Caco-2 (cell line): ENCODE measurements at regions of chr3 and their contacts with region 1.

Region 1: GRCh38 chr3:49093853-49094767 is at the start of gene QRICH1:
- DNase-seq: peak; percentile 97 to 98
- H3K4me3 ChIP-seq: peak within 1 kb of the TSS; percentile 67
- H3K4me3 Mint-ChIP-seq: peak within 1 kb of the TSS; percentile 95
- H3K27ac Mint-ChIP-seq: peak within 1 kb of the TSS; percentile 99
- H3K4me1 ChIP-seq: peaks cover 4% of the 10 kb centered on the region
- H3K4me1 Mint-ChIP-seq: no peaks in the 10 kb centered on the region
- H3K27me3 ChIP-seq: no peaks in the 10 kb centered on the region
- H3K27me3 Mint-ChIP-seq: no peaks in the 10 kb centered on the region
- CTCF ChIP-seq: peak; percentile 33 to 83
- total RNA-seq, gene QRICH1: 112 and 119 TPM in 2 replicates

Region 2: DNA sequence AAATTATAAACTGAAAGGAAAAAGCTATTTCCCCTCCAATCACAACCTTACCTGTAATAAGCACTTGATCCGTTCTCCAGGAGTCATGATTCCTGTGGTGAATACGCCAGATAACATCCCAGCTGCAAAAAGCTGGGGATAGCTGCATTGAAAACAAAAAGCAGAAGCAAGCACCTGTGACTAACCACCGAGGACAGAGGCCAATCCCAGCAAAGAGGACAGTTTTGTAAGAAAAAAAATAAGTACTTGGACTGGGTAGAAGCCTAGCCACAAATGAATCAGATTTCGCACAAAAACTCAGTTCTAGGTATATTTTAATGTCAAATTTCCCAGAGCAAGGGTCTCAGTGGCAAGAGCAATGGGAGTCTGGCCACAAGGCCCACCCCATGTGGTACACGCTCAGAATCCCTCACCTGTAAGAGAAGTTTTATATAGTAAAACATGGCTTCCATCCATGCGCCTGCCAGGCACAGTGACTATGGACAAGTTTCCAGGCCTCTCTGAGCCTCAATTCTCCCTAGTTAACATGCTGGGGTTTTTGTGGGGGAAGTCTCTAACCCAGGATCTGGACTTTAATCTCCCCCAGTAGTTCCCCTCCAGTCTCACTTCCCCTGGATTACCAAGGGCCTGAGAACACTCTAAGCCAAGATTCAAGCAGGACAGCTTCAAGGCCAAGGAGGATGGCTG is 214.7 kb before region 1 on chr3:
- CTCF ChIA-PET with region 1: no interaction called
- POLR2A ChIA-PET with region 1: no interaction called
- intact Hi-C with region 1: no loop called
- DNase-seq: no peak
- H3K4me3 ChIP-seq: no peak overlapping the region
- H3K4me3 Mint-ChIP-seq: no peak overlapping the region
- H3K27ac Mint-ChIP-seq: no peak overlapping the region
- H3K4me1 ChIP-seq: no peaks in the 10 kb centered on the region
- H3K4me1 Mint-ChIP-seq: no peaks in the 10 kb centered on the region
- H3K27me3 ChIP-seq: no peaks in the 10 kb centered on the region
- H3K27me3 Mint-ChIP-seq: no peaks in the 10 kb centered on the region
- CTCF ChIP-seq: no peak

Region 3: GRCh38 chr3:48989796-48990635 is 104.1 kb before region 1 on chr3 and contains the start of gene P4HTM:
- CTCF ChIA-PET with region 1: interaction called, 20 read pairs
- POLR2A ChIA-PET with region 1: interaction called, 4 read pairs
- intact Hi-C with region 1: loop called (anchors 1 kb)
- DNase-seq: peak; percentile 82 to 84
- H3K4me3 ChIP-seq: peak within 1 kb of the TSS; percentile 95
- H3K4me3 Mint-ChIP-seq: peak within 1 kb of the TSS; percentile 96
- H3K27ac Mint-ChIP-seq: peak within 1 kb of the TSS; percentile 98
- H3K4me1 ChIP-seq: peaks cover 13% of the 10 kb centered on the region
- H3K4me1 Mint-ChIP-seq: peaks cover 13% of the 10 kb centered on the region
- H3K27me3 ChIP-seq: no peaks in the 10 kb centered on the region
- H3K27me3 Mint-ChIP-seq: no peaks in the 10 kb centered on the region
- CTCF ChIP-seq: peak in 1 of 2 experiments; percentile 40
- total RNA-seq, gene P4HTM: 24.4 and 25.5 TPM in 2 replicates

Region 4: DNA sequence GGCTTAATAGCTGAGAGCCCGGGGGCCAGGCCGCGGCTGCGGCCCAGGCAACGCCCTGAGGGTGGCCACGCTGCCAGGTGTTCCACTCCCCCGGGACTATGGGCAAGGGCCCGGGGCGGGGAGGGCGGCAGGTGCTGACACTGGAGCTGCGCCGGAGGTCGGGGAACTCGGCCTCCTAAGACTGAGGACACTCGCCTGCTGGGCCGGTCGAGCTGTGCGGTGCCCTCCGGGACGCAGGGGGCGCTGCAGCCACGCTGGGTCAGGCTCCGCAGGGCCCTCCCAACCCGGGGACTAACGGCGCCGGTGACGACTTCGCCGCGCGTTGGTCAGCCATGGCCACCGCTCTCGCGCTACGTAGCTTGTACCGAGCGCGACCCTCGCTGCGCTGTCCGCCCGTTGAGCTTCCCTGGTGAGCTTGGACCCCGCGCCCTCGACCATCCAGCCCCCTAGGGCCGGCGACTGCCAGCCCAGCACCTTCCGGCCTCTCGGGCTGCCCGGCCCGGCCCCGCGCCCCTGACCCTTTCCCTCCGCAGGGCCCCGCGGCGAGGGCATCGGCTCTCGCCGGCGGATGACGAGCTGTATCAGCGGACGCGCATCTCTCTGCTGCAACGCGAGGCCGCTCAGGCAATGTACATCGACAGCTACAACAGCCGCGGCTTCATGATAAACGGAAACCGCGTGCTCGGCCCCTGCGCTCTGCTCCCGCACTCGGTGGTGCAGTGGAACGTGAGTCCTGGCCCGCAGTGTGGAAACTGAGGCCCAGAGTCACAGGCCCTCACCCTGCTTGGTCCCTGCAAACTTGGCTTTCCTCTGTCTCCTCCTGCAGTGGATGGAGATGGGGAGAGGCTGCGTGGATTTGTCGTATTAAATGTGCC is 72.1 kb before region 1 on chr3 and contains the start of gene NDUFAF3:
- CTCF ChIA-PET with region 1: interaction called, 14 read pairs
- POLR2A ChIA-PET with region 1: interaction called, 44 read pairs
- intact Hi-C with region 1: loop called (anchors 2 kb)
- DNase-seq: peak; percentile 95 to 98
- H3K4me3 ChIP-seq: peak within 1 kb of the TSS; percentile 85
- H3K4me3 Mint-ChIP-seq: peak within 1 kb of the TSS; percentile 88
- H3K27ac Mint-ChIP-seq: peak within 1 kb of the TSS; percentile 97
- H3K4me1 ChIP-seq: peaks cover 3% of the 10 kb centered on the region; the same call in 1 of the 2 replicates
- H3K4me1 Mint-ChIP-seq: peaks cover 6% of the 10 kb centered on the region
- H3K27me3 ChIP-seq: no peaks in the 10 kb centered on the region
- H3K27me3 Mint-ChIP-seq: no peaks in the 10 kb centered on the region
- CTCF ChIP-seq: peak; percentile 82 to 92
- total RNA-seq, gene NDUFAF3: 65.9 and 68.7 TPM in 2 replicates

Region 5: DNA sequence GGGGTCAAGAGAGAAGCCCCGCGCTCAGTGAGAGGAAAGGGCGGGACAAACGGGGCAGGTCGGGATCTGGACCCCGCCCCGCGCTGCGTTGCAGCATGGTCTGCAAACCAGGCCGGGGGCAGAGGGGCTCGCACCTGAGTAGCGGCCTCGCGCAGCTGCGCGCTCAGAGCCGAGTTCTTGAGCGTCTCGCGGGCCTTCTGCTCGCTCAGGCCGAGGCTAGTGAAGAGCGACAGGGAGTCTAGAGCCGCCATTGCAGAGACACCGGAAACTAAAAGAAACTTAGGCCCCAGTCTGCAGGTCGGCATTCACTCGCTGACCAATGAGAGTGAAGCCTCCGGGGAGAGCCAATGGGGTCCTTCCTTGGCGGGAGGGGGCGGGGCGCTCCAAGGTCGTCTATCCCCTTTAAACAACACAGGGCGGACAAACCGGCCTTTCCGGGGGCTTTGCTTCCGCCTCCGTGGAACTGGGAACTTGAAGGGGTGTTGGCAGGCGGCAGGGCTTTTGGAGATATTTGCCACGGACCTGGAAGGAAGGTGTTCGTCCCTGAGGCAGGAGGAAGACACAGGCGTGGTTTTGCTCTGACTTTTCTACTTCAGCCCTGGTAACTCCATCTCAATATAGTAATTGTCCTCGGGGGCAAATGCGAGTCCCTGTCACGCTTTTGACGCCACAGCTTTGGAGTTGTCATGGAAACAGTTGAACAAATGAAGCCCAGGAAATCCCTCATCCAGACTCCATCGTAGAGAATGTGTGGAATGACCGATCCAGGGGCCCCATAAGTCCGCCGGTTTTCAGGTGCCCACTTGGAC is 10.6 kb after region 1 on chr3 and contains the start of gene QARS1:
- CTCF ChIA-PET with region 1: interaction called, 8 read pairs
- POLR2A ChIA-PET with region 1: interaction called, 17 read pairs
- intact Hi-C with region 1: loop called (anchors 1 kb)
- DNase-seq: peak; percentile 95 to 96
- H3K4me3 ChIP-seq: peak within 1 kb of the TSS; percentile 80
- H3K4me3 Mint-ChIP-seq: peak within 1 kb of the TSS; percentile 96
- H3K27ac Mint-ChIP-seq: peak within 1 kb of the TSS; percentile 98
- H3K4me1 ChIP-seq: no peaks in the 10 kb centered on the region; the same call in 1 of the 2 replicates
- H3K4me1 Mint-ChIP-seq: peaks cover 7% of the 10 kb centered on the region
- H3K27me3 ChIP-seq: no peaks in the 10 kb centered on the region
- H3K27me3 Mint-ChIP-seq: no peaks in the 10 kb centered on the region
- CTCF ChIP-seq: no peak
- total RNA-seq, gene QARS1: 361 and 386 TPM in 2 replicates

Region 6: GRCh38 chr3:49133226-49133951 is 39.3 kb after region 1 on chr3:
- CTCF ChIA-PET with region 1: interaction called, 15 read pairs
- POLR2A ChIA-PET with region 1: interaction called, 27 read pairs
- intact Hi-C with region 1: loop called (anchors 1 kb)
- DNase-seq: peak; percentile 86 to 90
- H3K4me3 ChIP-seq: peak overlapping the region; percentile 66
- H3K4me3 Mint-ChIP-seq: peak overlapping the region; percentile 93
- H3K27ac Mint-ChIP-seq: peak overlapping the region; percentile 90
- H3K4me1 ChIP-seq: peaks cover 15% of the 10 kb centered on the region
- H3K4me1 Mint-ChIP-seq: peaks cover 13% of the 10 kb centered on the region
- H3K27me3 ChIP-seq: no peaks in the 10 kb centered on the region
- H3K27me3 Mint-ChIP-seq: no peaks in the 10 kb centered on the region
- CTCF ChIP-seq: no peak

Region 7: GRCh38 chr3:49411968-49412631 is 318.0 kb after region 1 on chr3 and contains the starts of genes RHOA and TCTA:
- CTCF ChIA-PET with region 1: no interaction called
- POLR2A ChIA-PET with region 1: interaction called, 11 read pairs
- intact Hi-C with region 1: no loop called
- DNase-seq: peak; percentile 98 to 100
- H3K4me3 ChIP-seq: peak within 1 kb of the TSS; percentile 93
- H3K4me3 Mint-ChIP-seq: peak within 1 kb of the TSS; percentile 88
- H3K27ac Mint-ChIP-seq: peak within 1 kb of the TSS; percentile 94
- H3K4me1 ChIP-seq: peaks cover 25% of the 10 kb centered on the region
- H3K4me1 Mint-ChIP-seq: peaks cover 23% of the 10 kb centered on the region
- H3K27me3 ChIP-seq: no peaks in the 10 kb centered on the region
- H3K27me3 Mint-ChIP-seq: no peaks in the 10 kb centered on the region
- CTCF ChIP-seq: no peak
- total RNA-seq, gene RHOA: 338 and 348 TPM in 2 replicates
- total RNA-seq, gene TCTA: 14.2 and 15.5 TPM in 2 replicates